Transverse colon (tissue), 4 donors: ENCODE measurements at regions of chr16 and their contacts with region 1.

Region 1: DNA sequence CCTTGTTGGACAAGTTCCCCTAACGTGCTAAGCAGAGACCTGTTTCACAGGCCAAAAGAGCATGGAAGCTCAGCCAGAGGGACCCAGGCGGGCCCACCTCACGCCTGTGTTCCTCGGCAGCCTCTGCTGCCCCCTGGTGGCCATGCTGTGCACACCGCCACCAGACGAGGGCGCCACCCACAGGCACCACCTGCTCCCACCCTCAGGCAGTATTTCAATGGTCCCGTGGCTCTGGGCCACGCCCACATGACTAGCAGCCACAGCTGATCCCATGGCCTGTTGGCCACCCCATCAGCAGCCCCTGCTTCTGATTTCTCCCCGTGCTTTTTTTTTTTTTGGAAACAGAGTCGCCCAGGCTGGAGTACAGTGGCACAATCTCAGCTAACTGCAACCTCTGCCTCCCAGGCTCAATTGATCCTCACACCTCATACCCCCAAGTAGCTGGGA is 18.9 kb downstream of the MPG start:
- DNase-seq: peak; percentile 91
- H3K4me3 ChIP-seq: no peak overlapping the region
- H3K27ac ChIP-seq: no peak overlapping the region
- H3K4me1 ChIP-seq: peaks cover 0 to 11% (median 0%) of the 10 kb centered on the region in 4 donors
- H3K27me3 ChIP-seq: no peaks in the 10 kb centered on the region
- CTCF ChIP-seq: peak; percentile 97 to 100 (median 99)
- EP300 ChIP-seq: no peak
- POLR2A ChIP-seq: no peak

Region 2: GRCh38 chr16:65671-66137 is 31.3 kb before region 1 on chr16:
- in situ Hi-C with region 1: no loop called
- intact Hi-C with region 1: loop called (anchors 2 kb)
- DNase-seq: peak; percentile 86
- H3K4me3 ChIP-seq: no peak overlapping the region
- H3K27ac ChIP-seq: no peak overlapping the region
- H3K4me1 ChIP-seq: peaks cover 1 to 26% (median 3%) of the 10 kb centered on the region in 4 donors
- H3K27me3 ChIP-seq: no peaks in the 10 kb centered on the region
- CTCF ChIP-seq: peak; percentile 94 to 99 (median 97)
- EP300 ChIP-seq: no peak
- POLR2A ChIP-seq: no peak

Region 3: GRCh38 chr16:149024-149662 is 52.2 kb after region 1 on chr16:
- in situ Hi-C with region 1: no loop called
- intact Hi-C with region 1: no loop called
- DNase-seq: no peak
- H3K4me3 ChIP-seq: no peak overlapping the region
- H3K27ac ChIP-seq: no peak overlapping the region
- H3K4me1 ChIP-seq: peaks cover 0 to under 1% (median under 1%) of the 10 kb centered on the region in 4 donors
- H3K27me3 ChIP-seq: peaks cover 42% of the 10 kb centered on the region
- CTCF ChIP-seq: no peak
- EP300 ChIP-seq: no peak
- POLR2A ChIP-seq: no peak

Region 4: DNA sequence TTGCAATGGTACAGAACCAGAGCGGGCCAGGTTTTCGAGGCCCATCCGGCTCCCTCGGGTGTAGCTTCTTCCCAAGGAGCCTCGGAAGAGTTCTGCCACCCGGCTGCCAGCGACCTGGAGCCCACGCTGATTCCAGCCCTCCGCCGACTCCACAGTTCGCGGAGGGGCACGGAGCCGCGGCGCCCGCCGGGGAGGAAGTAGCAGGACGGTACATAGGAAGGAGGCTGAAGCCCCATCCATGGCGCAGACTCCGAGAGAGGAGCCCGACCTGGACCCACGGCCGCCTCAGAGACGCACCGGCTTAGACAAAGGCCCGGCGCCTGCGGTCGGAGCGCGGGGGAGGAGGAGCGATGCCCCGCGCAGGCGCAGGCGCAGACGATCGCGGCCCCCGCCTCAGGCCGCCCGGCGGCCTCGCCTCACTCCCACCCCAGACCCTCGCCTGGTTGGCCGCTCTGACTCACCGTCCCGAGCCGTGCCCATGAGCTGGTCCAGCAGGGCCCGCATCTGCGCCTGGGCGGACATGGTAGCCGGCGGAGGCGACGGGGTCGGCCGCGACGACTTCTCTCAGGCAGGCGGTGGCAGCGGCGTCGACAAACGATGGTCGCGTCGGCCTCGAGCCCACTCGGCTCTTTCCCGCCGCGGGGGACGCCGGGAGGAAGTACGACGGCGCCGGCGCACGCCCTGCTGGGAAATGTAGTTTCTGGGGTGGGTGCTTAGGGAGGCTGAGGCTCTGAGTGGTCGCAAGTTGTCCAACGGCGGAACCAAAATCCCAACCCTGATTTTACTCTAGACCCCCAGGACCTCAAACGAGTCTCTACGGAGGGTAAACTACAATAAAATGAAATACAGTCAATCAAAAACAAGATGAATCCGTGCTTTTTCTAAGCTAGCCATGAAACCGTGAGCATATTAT is 132.1 kb after region 1 on chr16 and contains the start of gene LUC7L:
- in situ Hi-C with region 1: no loop called
- intact Hi-C with region 1: no loop called
- DNase-seq: peak; percentile 90
- H3K4me3 ChIP-seq: peak within 1 kb of the TSS; percentile 79 to 91 (median 86)
- H3K27ac ChIP-seq: peak within 1 kb of the TSS; percentile 96 to 98 (median 97)
- H3K4me1 ChIP-seq: peaks cover 9 to 24% (median 16%) of the 10 kb centered on the region in 4 donors
- H3K27me3 ChIP-seq: no peaks in the 10 kb centered on the region
- CTCF ChIP-seq: peak in 1 of 5 experiments; percentile 16
- EP300 ChIP-seq: peak; percentile 44
- POLR2A ChIP-seq: peak; percentile 94
- total RNA-seq, gene LUC7L: 85.1 to 316 (median 153) TPM

Region 5: DNA sequence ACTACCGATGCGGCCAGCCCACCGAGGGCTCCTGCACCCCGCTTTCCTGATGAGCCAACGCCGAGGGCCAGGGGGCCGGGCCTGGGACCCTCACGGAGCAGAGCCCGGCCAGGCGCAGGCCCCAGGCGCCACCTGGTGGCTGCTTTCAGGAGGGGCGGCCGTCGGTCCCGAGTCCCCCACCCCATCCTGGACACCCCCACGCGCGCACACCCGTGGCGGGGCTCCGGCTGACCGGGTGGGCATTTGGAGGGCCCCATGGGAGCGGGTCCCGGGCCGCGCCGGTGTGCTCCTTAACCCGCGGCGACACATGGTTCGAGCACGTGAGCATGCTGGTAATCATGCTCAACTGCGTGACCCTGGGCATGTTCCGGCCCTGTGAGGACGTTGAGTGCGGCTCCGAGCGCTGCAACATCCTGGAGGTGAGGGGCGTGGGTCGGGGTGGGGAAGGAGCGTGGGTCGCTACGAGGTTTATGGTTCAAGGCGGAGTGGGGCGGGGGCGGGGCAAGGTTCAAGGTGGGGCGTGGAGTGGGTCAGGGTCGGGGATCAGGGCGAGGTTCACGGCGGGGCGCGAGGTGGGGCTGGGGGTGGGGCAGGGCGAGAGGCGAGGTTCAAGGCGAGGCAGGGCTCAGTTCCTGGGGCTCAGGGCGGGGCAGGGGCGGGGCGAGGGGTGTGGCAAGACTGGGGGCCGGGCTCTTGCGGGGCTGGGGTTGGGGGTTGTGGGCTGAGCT is 1097.9 kb after region 1 on chr16:
- in situ Hi-C with region 1: no loop called
- intact Hi-C with region 1: no loop called
- DNase-seq: no peak
- H3K4me3 ChIP-seq: no peak overlapping the region
- H3K27ac ChIP-seq: peak overlapping the region in 3 of 4 donors; percentile 34 to 75 (median 42)
- H3K4me1 ChIP-seq: peaks cover 0 to 16% (median 6%) of the 10 kb centered on the region in 4 donors
- H3K27me3 ChIP-seq: no peaks in the 10 kb centered on the region
- CTCF ChIP-seq: peak; percentile 54 to 71 (median 70)
- EP300 ChIP-seq: no peak
- POLR2A ChIP-seq: no peak

Region 6: DNA sequence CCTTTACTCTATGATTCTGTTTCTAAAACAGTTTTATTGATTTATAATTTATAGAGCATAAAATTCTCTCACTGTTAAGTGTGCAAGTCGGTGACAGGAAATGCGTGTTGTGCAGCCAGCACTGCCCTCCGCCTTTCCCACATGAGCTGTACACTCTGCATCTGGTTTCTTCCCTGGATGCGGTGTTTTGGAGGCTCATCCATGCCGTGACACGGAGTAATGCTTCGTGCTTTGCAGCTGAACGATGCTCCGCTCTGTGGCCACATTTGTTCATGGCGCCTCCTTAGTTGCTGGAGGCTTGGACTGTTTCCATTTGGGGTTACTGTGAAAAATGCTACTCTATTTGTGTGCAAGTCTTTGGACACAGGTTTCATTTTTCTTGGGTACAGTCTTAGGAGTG is 1703.7 kb after region 1 on chr16:
- in situ Hi-C with region 1: no loop called
- intact Hi-C with region 1: no loop called
- DNase-seq: no peak
- H3K4me3 ChIP-seq: no peak overlapping the region
- H3K27ac ChIP-seq: no peak overlapping the region
- H3K4me1 ChIP-seq: no peaks in the 10 kb centered on the region
- H3K27me3 ChIP-seq: no peaks in the 10 kb centered on the region
- CTCF ChIP-seq: no peak
- EP300 ChIP-seq: no peak
- POLR2A ChIP-seq: no peak